Ovary (tissue), 10 donors: ENCODE measurements at regions of chr5 and their contacts with region 1.

Region 1: GRCh38 chr5:132813599-132814502 is 749 bp downstream of the SOWAHA start:
- DNase-seq: peak in 3 of 5 donors; percentile 11 to 51 (median 34)
- H3K4me3 ChIP-seq: peak overlapping the region; percentile 27
- H3K27ac ChIP-seq: no peak overlapping the region
- H3K4me1 ChIP-seq: no peaks in the 10 kb centered on the region
- H3K27me3 ChIP-seq: no peaks in the 10 kb centered on the region
- CTCF ChIP-seq: no peak
- EP300 ChIP-seq: no peak
- POLR2A ChIP-seq: no peak

Region 2: GRCh38 chr5:132227485-132228240 is 586.2 kb before region 1 on chr5 and contains the start of gene P4HA2:
- intact Hi-C with region 1: no loop called
- DNase-seq: peak; percentile 77 to 89 (median 82)
- H3K4me3 ChIP-seq: peak within 1 kb of the TSS; percentile 44
- H3K27ac ChIP-seq: peak within 1 kb of the TSS; percentile 8 to 73
- H3K4me1 ChIP-seq: peaks cover 7% of the 10 kb centered on the region
- H3K27me3 ChIP-seq: no peaks in the 10 kb centered on the region
- CTCF ChIP-seq: peak in 2 of 3 donors; percentile 47 to 51
- EP300 ChIP-seq: no peak
- POLR2A ChIP-seq: no peak
- total RNA-seq, gene P4HA2: 3.9 to 36.9 (median 15.4) TPM

Region 3: GRCh38 chr5:132736853-132737833 is 76.7 kb before region 1 on chr5 and contains the start of gene KIF3A:
- intact Hi-C with region 1: loop called in 1 of 4 experiments (anchors 10 kb)
- DNase-seq: peak; percentile 89 to 94 (median 93)
- H3K4me3 ChIP-seq: peak within 1 kb of the TSS; percentile 59
- H3K27ac ChIP-seq: no peak within 1 kb of the TSS
- H3K4me1 ChIP-seq: peaks cover 2% of the 10 kb centered on the region
- H3K27me3 ChIP-seq: no peaks in the 10 kb centered on the region
- CTCF ChIP-seq: peak in 2 of 3 donors; percentile 21 to 51
- EP300 ChIP-seq: no peak
- POLR2A ChIP-seq: no peak
- total RNA-seq, gene KIF3A: 8.0 to 13.0 (median 11.3) TPM